ENCODE measurements at regions of chr1 and their contacts with region 1.

Region 1: DNA sequence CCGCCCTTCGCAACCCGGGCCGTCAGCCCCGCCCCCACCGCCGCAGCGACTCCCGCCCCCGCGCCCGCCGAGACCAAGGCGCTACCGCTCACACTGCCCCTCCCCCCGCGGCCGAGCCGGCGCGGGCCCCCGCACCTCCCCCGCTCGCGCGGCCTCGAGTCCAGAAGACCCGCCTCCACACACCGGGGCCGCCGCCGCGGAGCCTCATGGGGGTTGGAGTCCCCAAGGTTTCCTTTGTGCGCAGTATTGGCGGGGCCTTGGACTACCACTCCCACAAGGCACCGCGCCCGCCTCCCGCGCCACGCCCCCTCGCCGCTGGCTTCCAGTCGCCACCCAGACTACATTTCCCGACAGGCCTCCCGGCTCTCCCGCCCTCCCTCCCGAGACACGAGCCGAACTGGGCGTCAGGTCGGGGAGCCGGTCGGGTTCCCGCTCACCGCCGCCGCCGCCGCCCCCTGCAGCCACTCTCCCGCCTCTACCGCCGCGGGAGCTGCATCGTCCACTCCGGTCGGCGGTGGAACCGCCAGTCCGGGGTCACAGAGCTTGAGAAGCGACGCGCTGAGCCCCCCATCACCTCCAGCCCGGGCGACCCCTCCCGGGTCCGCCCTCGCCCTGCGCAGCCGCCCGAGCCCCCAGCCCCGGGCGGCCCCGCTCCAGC is at the start of gene PHF13:
- DNase-seq: peak; percentile 99
- ATAC-seq: peak; percentile 96
- H3K4me3 Mint-ChIP-seq: peak within 1 kb of the TSS; percentile 90
- H3K27ac Mint-ChIP-seq: peak within 1 kb of the TSS; percentile 83
- H3K4me1 Mint-ChIP-seq: peaks cover 15% of the 10 kb centered on the region
- H3K27me3 Mint-ChIP-seq: no peaks in the 10 kb centered on the region
- CTCF ChIP-seq: no peak
- total RNA-seq, gene PHF13: 5.4 and 6.1 TPM in 2 replicates

Region 2: GRCh38 chr1:6554031-6554906 is 59.2 kb before region 1 on chr1 and contains the start of gene NOL9:
- CTCF ChIA-PET with region 1: no interaction called
- POLR2A ChIA-PET with region 1: no interaction called
- intact Hi-C with region 1: loop called (anchors 1 kb)
- DNase-seq: peak; percentile 98
- ATAC-seq: peak; percentile 98
- H3K4me3 Mint-ChIP-seq: peak within 1 kb of the TSS; percentile 85
- H3K27ac Mint-ChIP-seq: peak within 1 kb of the TSS; percentile 84
- H3K4me1 Mint-ChIP-seq: peaks cover 21% of the 10 kb centered on the region
- H3K27me3 Mint-ChIP-seq: no peaks in the 10 kb centered on the region
- CTCF ChIP-seq: peak; percentile 62
- total RNA-seq, gene NOL9: 43.6 and 58.6 TPM in 2 replicates

Region 3: GRCh38 chr1:6602669-6603237 is 10.7 kb before region 1 on chr1 and contains the start of gene KLHL21:
- CTCF ChIA-PET with region 1: no interaction called
- POLR2A ChIA-PET with region 1: interaction called, 64 read pairs
- intact Hi-C with region 1: loop called (anchors 1 kb)
- DNase-seq: peak; percentile 86
- ATAC-seq: peak; percentile 70
- H3K4me3 Mint-ChIP-seq: peak within 1 kb of the TSS; percentile 91
- H3K27ac Mint-ChIP-seq: peak within 1 kb of the TSS; percentile 96
- H3K4me1 Mint-ChIP-seq: peaks cover 40% of the 10 kb centered on the region
- H3K27me3 Mint-ChIP-seq: no peaks in the 10 kb centered on the region
- CTCF ChIP-seq: no peak
- total RNA-seq, gene KLHL21: 14.6 and 15.9 TPM in 2 replicates

Region 4: DNA sequence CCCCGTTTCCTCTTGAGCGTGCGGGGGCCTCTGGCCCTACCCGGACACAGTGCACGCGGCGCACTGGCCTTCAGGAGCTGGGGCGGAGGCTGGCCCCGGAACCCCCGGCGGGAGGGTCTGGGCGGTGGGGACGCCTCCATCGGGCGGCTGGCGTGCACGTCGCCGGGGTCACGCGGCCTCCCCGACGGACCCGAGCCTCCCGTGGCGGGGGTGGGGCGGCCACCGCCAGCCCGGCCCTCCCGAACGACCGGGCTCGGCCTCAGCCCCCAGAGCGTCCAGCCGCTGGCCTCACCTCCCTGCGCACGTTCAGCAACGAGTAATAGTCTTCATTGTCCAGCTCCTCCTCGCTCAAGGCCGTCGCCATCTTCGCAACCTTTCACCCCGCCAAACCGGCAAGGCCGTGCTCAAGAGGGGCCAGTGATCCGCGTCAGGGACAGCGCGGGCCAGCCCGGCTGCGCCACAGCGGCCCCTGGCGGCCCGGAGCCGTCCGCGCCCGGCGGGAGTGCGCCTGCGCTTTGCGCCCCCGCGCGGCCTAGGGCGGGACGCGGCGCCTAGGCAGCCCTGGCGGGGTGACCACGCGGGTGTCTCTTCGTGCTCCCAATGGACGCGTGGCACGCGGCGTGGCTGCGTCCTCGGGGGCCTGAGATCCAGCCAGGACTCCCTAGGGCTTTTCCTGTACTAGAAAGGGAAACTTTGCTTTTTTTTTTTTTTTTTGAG is 88.1 kb after region 1 on chr1 and contains the start of gene DNAJC11:
- CTCF ChIA-PET with region 1: no interaction called
- POLR2A ChIA-PET with region 1: no interaction called
- intact Hi-C with region 1: loop called (anchors 1 kb)
- DNase-seq: peak; percentile 99
- ATAC-seq: peak; percentile 95
- H3K4me3 Mint-ChIP-seq: peak within 1 kb of the TSS; percentile 92
- H3K27ac Mint-ChIP-seq: peak within 1 kb of the TSS; percentile 88
- H3K4me1 Mint-ChIP-seq: peaks cover 21% of the 10 kb centered on the region
- H3K27me3 Mint-ChIP-seq: no peaks in the 10 kb centered on the region
- CTCF ChIP-seq: peak; percentile 28
- total RNA-seq, gene DNAJC11: 57.0 and 65.6 TPM in 2 replicates

Region 5: GRCh38 chr1:7783826-7784491 is 1170.5 kb after region 1 on chr1 and contains the start of gene PER3:
- CTCF ChIA-PET with region 1: no interaction called
- POLR2A ChIA-PET with region 1: no interaction called
- intact Hi-C with region 1: loop called (anchors 10 kb)
- DNase-seq: peak; percentile 95
- ATAC-seq: peak; percentile 92
- H3K4me3 Mint-ChIP-seq: peak within 1 kb of the TSS; percentile 80
- H3K27ac Mint-ChIP-seq: no peak within 1 kb of the TSS
- H3K4me1 Mint-ChIP-seq: peaks cover 26% of the 10 kb centered on the region
- H3K27me3 Mint-ChIP-seq: no peaks in the 10 kb centered on the region
- CTCF ChIP-seq: no peak
- total RNA-seq, gene PER3: 2.7 and 3.3 TPM in 2 replicates

Measured in activated B cell treated with CpG ODN at 0.5 μM for 24 hours (primary cell).